CD8-positive, alpha-beta memory T cell (primary cell): ENCODE measurements at regions of chr15 and their contacts with region 1.

Region 1: GRCh38 chr15:59501597-59501996 is 63.6 kb downstream of the FAM81A start:
- DNase-seq: no peak
- H3K4me3 ChIP-seq: no peak overlapping the region
- H3K4me3 Mint-ChIP-seq: no peak overlapping the region
- H3K27ac ChIP-seq: no peak overlapping the region
- H3K27ac Mint-ChIP-seq: peak overlapping the region in 1 of 8 donors; percentile 20
- H3K4me1 ChIP-seq: no peaks in the 10 kb centered on the region
- H3K4me1 Mint-ChIP-seq: no peaks in the 10 kb centered on the region
- H3K27me3 ChIP-seq: no peaks in the 10 kb centered on the region
- H3K27me3 Mint-ChIP-seq: peaks cover 0 to 13% of the 10 kb centered on the region in 2 donors

Region 2: GRCh38 chr15:59998305-59998949 is 496.8 kb after region 1 on chr15:
- CTCF ChIA-PET with region 1: no interaction called
- POLR2A ChIA-PET with region 1: interaction called, 12 read pairs
- DNase-seq: no peak
- H3K4me3 ChIP-seq: no peak overlapping the region
- H3K4me3 Mint-ChIP-seq: peak overlapping the region in 1 of 7 donors; percentile 30
- H3K27ac ChIP-seq: no peak overlapping the region
- H3K27ac Mint-ChIP-seq: peak overlapping the region in 1 of 8 donors; percentile 77
- H3K4me1 ChIP-seq: peaks cover 23% of the 10 kb centered on the region
- H3K4me1 Mint-ChIP-seq: peaks cover 25 to 48% (median 46%) of the 10 kb centered on the region in 3 donors
- H3K27me3 ChIP-seq: peaks cover 97% of the 10 kb centered on the region
- H3K27me3 Mint-ChIP-seq: peaks cover 96 to 97% of the 10 kb centered on the region in 2 donors

Region 3: DNA sequence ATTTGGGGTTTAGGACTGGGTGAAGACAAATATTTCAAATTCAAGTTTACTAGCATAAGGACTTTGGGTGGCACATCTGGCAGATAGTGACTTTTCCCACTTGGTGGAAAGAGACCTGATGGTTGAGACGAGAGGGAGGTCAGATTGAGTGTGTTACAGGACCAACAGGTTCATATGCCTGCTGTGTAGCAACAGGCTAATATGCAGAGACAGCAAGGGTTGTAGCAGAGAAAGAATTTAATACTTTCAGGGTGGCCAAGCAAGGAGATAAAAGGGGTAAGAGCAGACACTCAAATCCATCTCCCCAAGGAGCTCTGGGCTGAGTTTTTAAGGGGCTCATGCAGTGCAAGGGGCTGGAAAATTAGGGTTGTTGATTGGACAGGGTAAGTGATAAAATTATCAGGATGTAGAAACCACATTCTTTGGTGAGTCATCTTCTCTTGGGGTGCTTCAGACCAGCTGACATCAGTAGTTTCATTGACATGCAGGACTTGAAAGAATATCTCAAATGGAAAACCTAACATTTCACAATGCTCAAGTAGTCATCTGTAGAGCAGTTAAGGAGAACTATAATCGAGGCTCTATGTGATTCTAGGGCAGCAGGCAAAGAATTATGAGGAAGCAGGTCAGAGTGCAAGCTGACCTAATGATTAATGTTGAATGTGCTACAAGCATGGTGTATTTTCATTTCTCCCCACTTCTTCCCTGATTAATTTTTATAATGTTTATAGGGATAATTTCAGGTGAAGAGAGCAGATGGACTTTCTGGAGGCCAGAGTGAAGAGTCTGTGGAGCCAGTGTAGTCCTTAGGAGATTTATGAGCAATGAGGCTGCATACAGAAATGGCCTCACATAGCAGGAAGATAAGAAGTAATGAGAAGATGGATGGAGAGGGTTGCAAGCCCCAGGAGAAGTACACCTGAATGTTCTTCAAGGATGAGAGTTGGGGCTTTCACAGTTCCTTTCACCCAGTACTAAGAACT is 516.2 kb after region 1 on chr15:
- CTCF ChIA-PET with region 1: no interaction called
- POLR2A ChIA-PET with region 1: no interaction called
- DNase-seq: no peak
- H3K4me3 ChIP-seq: no peak overlapping the region
- H3K4me3 Mint-ChIP-seq: no peak overlapping the region
- H3K27ac ChIP-seq: no peak overlapping the region
- H3K27ac Mint-ChIP-seq: peak overlapping the region in 1 of 8 donors; percentile 28
- H3K4me1 ChIP-seq: no peaks in the 10 kb centered on the region
- H3K4me1 Mint-ChIP-seq: peaks cover 8 to 17% (median 11%) of the 10 kb centered on the region in 3 donors
- H3K27me3 ChIP-seq: no peaks in the 10 kb centered on the region
- H3K27me3 Mint-ChIP-seq: peaks cover 40 to 83% of the 10 kb centered on the region in 2 donors